ENCODE measurements at regions of chr18 and their contacts with region 1.

Region 1: DNA sequence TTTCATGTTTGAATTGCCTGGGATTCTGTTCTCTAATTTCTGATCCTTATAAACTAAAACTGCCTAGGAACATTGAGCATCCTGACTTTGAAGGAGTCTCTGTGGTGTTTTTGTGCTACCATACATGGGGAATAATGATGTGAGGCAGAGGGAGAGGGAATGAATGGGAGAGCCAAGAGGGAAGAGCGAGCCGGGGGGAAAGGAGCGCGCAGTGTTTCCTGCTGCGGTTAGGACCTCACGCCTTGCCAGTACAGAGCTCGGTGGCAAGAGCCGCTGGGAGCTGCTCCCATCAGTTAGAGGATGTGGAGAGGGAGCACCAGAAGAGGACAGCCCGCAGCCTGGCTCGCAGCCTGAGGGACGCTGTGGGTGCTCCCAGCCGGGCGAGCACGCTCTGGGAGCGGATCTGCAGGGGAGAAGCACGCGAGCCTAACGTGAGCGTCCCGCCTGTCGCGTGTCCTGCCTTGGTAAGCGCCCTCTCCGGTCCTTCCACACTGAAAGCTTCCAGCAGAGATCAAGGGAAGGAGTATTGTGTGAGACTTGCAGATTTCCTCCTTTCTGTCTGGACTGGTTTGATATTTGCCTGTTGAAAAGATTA is 114.7 kb downstream of the FAM210A start:
- DNase-seq: peak; percentile 38
- H3K4me3 Mint-ChIP-seq: peak overlapping the region; percentile 71
- H3K27ac Mint-ChIP-seq: peak overlapping the region; percentile 90
- H3K4me1 Mint-ChIP-seq: peaks cover 92% of the 10 kb centered on the region
- H3K27me3 Mint-ChIP-seq: no peaks in the 10 kb centered on the region

Region 2: GRCh38 chr18:13394801-13395200 is 216.9 kb before region 1 on chr18:
- CTCF ChIA-PET with region 1: no interaction called
- DNase-seq: no peak
- H3K4me3 Mint-ChIP-seq: no peak overlapping the region
- H3K27ac Mint-ChIP-seq: no peak overlapping the region
- H3K4me1 Mint-ChIP-seq: no peaks in the 10 kb centered on the region
- H3K27me3 Mint-ChIP-seq: no peaks in the 10 kb centered on the region

Region 3: GRCh38 chr18:13543811-13544732 is 67.6 kb before region 1 on chr18:
- CTCF ChIA-PET with region 1: no interaction called
- DNase-seq: no peak
- H3K4me3 Mint-ChIP-seq: no peak overlapping the region
- H3K27ac Mint-ChIP-seq: no peak overlapping the region
- H3K4me1 Mint-ChIP-seq: peaks cover 23% of the 10 kb centered on the region
- H3K27me3 Mint-ChIP-seq: no peaks in the 10 kb centered on the region

Region 4: GRCh38 chr18:13558124-13558523 is 53.6 kb before region 1 on chr18:
- CTCF ChIA-PET with region 1: interaction called, 64 read pairs
- DNase-seq: peak; percentile 44
- H3K4me3 Mint-ChIP-seq: no peak overlapping the region
- H3K27ac Mint-ChIP-seq: no peak overlapping the region
- H3K4me1 Mint-ChIP-seq: peaks cover 27% of the 10 kb centered on the region
- H3K27me3 Mint-ChIP-seq: no peaks in the 10 kb centered on the region

Region 5: DNA sequence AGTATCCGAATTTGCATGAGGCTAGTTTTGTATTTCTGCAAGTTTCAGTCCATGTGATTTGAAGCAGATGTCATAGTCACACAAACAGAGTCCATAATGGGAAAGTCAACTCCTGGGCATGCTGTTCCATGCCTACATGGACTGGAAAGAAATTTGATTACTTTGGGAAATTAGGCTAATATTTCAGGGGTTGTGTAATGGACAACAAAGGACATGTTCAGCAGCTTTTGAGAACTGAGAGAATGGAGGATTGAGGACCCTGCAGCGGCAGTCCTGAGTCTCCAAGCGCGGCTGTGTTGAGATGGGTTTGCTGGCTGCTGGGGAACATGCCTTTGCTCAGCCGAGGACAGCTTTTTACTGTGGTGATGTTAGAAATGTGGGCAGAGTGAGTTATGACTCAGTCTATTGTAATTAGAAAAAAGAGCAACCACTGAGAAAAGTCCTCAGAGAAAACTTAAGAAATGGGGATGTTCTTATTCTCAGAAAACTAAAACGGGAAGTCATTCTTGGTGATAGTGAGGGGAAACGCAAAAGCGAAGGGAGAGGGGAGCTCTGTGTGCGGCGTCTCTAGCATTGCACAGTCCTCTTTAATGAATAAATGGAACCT is 34.5 kb before region 1 on chr18:
- CTCF ChIA-PET with region 1: interaction called, 12 read pairs
- DNase-seq: peak; percentile 60
- H3K4me3 Mint-ChIP-seq: peak overlapping the region; percentile 47
- H3K27ac Mint-ChIP-seq: peak overlapping the region; percentile 81
- H3K4me1 Mint-ChIP-seq: peaks cover 63% of the 10 kb centered on the region
- H3K27me3 Mint-ChIP-seq: no peaks in the 10 kb centered on the region

Region 6: GRCh38 chr18:13594551-13594950 is 17.1 kb before region 1 on chr18:
- CTCF ChIA-PET with region 1: no interaction called
- DNase-seq: no peak
- H3K4me3 Mint-ChIP-seq: no peak overlapping the region
- H3K27ac Mint-ChIP-seq: no peak overlapping the region
- H3K4me1 Mint-ChIP-seq: peaks cover 30% of the 10 kb centered on the region
- H3K27me3 Mint-ChIP-seq: no peaks in the 10 kb centered on the region

Region 7: DNA sequence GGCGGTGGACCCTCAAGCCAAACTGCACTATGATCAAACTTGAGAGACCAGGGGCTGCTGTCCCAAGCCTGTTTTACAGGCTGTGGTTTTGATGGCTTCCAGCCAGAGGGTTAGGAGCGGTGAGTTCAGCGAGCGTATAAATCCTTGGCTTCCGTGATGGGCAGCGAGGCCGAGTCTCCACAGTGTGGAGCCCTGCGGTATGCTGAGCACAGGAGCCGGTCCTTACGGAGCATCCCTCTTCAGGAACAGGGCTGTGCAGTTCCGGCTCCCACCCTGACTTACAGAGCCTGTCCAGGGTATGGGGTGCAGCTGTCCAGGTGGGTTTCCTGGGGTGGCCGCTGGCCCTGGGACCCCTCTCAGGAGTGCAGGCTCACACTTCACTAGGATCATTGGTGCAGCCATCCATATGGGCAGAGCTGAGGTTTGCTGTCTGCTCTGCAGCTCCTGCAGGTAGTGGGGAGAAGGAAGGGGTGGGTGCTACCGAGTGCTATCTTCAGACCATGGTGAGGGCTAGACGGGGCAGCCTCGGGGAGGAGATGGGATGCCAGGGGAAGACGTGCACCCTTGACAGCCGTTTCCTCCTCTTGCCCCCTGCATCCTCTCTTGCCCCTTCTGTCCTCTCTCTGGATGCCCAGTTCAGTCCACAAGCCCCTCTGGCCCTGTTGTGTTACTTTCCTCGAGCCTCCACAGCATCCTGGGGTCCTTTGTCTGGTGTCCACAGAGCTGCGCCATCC is 10.4 kb after region 1 on chr18:
- CTCF ChIA-PET with region 1: no interaction called
- DNase-seq: no peak
- H3K4me3 Mint-ChIP-seq: no peak overlapping the region
- H3K27ac Mint-ChIP-seq: peak overlapping the region; percentile 49
- H3K4me1 Mint-ChIP-seq: peaks cover 13% of the 10 kb centered on the region
- H3K27me3 Mint-ChIP-seq: no peaks in the 10 kb centered on the region